AG04449 (cell line): ENCODE measurements at regions of chr1 and their contacts with region 1.

Region 1: GRCh38 chr1:46527474-46528296 is 23.8 kb downstream of the KNCN start:
- DNase-seq: no peak
- H3K4me3 ChIP-seq: no peak overlapping the region
- CTCF ChIP-seq: peak; percentile 95

Region 2: GRCh38 chr1:46461809-46462448 is 65.8 kb before region 1 on chr1:
- CTCF ChIA-PET with region 1: interaction called, 429 read pairs
- POLR2A ChIA-PET with region 1: no interaction called
- DNase-seq: no peak
- H3K4me3 ChIP-seq: no peak overlapping the region
- CTCF ChIP-seq: no peak

Region 3: GRCh38 chr1:46489638-46490405 is 37.9 kb before region 1 on chr1 and contains the start of gene DMBX1:
- CTCF ChIA-PET with region 1: interaction called, 398 read pairs
- POLR2A ChIA-PET with region 1: no interaction called
- DNase-seq: no peak
- H3K4me3 ChIP-seq: no peak within 1 kb of the TSS
- CTCF ChIP-seq: no peak

Region 4: GRCh38 chr1:46508757-46509156 is 18.9 kb before region 1 on chr1:
- CTCF ChIA-PET with region 1: interaction called, 41 read pairs
- POLR2A ChIA-PET with region 1: no interaction called
- DNase-seq: no peak
- H3K4me3 ChIP-seq: no peak overlapping the region
- CTCF ChIP-seq: no peak

Region 5: DNA sequence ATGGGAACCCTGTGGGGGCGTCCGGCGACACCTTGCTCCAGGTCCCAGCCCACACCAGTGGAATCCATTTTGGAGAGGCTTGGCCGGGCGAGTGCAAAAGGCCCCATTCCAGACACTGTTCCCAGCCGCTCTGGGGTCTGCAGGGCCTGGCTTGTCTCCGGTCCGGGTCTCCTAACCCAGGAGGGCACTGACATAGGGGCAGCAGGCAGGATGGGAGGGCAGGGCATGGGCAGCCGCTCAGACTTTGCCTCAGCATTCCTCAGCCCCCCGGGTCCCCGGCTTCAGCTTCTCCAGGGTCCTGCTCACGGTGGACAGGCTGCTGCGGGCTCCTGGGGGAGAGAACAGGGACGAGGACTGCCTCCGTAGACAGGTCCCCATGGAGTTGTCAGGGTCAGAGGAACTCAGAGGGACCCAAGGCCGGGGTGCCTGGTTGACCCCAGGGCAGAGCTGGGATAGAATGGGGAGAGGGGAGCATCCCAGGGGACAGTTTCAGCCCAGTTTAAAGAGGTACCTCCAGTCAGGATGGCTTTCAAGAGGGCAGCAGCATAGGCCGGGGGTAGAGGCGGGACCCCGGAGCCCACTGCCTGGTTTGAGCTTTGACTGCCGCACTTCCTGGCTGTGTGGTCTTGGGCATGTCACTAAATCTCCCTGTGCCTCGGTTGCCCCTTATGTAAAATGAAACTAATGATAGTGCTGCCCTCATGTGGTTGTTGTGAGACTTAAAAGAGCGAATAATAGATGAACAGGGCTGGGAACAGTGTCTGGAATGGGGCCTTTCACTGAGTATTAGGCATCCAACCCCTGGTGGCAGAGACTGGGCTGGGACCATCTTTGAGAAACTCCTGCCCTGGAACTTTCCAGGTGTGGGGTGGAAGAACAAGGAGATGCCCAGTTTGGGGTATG is 20.0 kb after region 1 on chr1:
- CTCF ChIA-PET with region 1: interaction called, 105 read pairs
- POLR2A ChIA-PET with region 1: no interaction called
- DNase-seq: no peak
- H3K4me3 ChIP-seq: no peak overlapping the region
- CTCF ChIP-seq: peak; percentile 32

Region 6: GRCh38 chr1:46767649-46768282 is 240.1 kb after region 1 on chr1:
- CTCF ChIA-PET with region 1: no interaction called
- POLR2A ChIA-PET with region 1: no interaction called
- DNase-seq: no peak
- H3K4me3 ChIP-seq: no peak overlapping the region
- CTCF ChIP-seq: no peak